Upper lobe of right lung (tissue), 1 donor: ENCODE measurements at regions of chr3 and their contacts with region 1.

Region 1: DNA sequence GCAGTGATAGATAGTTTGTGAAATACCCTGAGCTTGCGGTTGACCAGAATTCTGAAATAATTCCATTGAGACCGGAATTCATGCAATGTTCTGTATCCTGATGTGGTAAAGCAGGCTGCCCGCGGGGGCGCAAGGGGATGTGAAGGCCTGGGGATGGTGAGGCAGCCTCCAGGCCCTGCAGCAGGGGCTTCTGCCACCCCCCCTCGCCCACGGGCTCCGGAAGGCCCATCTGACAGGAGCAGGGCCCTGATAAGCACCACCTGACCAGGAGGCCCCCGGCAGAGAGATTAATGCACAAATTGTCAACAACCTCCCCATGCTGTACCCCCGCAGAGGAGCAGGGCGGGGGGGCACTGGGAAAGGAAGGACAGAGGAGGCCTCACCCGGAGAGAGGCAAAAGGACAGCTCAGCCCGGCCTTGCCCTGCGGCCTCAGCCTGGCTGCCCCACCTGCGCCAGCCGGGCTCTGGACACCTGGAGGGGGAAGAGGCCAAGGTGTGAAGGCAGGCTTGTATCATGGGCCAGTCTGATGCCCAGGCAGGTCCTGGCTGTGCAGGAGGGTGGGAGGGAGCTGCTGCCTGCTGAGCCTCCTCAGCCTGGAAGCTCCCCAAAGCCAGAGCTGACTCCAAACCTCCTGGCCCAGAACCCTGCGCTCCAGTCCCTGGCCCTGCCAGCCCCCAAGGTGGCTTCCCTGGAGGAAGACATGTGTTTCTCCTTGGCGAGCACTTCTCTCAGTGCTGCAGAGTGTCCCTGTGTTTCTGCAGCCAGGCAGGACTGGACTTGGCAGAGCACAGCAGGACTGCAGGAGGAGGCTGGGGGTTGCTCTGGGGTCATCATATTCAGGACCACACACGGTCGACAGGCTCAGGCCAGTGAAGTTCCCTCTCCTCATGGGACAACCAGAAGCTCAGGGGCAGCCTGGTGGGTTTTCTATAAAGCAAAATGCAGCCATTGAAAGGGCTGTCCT is 46.5 kb downstream of the RPN1 start:
- DNase-seq: no peak
- ATAC-seq: no peak
- H3K4me3 ChIP-seq: no peak overlapping the region
- H3K27ac ChIP-seq: no peak overlapping the region
- H3K4me1 ChIP-seq: peaks cover 5% of the 10 kb centered on the region
- H3K27me3 ChIP-seq: no peaks in the 10 kb centered on the region
- CTCF ChIP-seq: no peak

Region 2: GRCh38 chr3:128426128-128426921 is 177.8 kb before region 1 on chr3:
- intact Hi-C with region 1: loop called (anchors 10 kb)
- DNase-seq: peak; percentile 78
- ATAC-seq: peak; percentile 92
- H3K4me3 ChIP-seq: peak overlapping the region; percentile 29
- H3K27ac ChIP-seq: no peak overlapping the region
- H3K4me1 ChIP-seq: no peaks in the 10 kb centered on the region
- H3K27me3 ChIP-seq: peaks cover 30% of the 10 kb centered on the region
- CTCF ChIP-seq: peak; percentile 73